ENCODE measurements at regions of chr5 and their contacts with region 1.

Region 1: GRCh38 chr5:138054847-138055558 is 22.1 kb upstream of the FAM13B start:
- DNase-seq: no peak
- CTCF ChIP-seq: no peak

Region 2: DNA sequence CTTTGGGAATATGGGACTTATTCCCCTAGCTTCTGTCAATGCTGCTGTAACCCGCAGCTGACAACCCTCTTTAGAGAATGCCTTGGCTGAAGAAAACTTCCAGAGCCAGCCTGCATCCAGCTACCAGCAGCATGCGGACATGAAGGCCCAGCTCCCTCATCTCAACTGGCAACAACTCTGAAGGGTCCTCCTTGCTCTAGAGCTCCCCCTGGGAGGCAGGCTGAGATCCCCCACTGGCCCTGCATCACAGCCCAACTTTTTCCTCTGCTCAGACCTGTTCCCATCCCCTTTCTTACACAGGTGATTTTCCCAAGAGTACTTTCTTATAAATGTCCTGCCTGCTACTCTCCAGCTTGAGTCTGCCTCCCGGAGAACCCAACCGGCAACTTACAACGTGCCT is 10.1 kb after region 1 on chr5:
- CTCF ChIA-PET with region 1: interaction called, 18 read pairs
- POLR2A ChIA-PET with region 1: interaction called, 6 read pairs
- DNase-seq: no peak
- CTCF ChIP-seq: no peak

Region 3: DNA sequence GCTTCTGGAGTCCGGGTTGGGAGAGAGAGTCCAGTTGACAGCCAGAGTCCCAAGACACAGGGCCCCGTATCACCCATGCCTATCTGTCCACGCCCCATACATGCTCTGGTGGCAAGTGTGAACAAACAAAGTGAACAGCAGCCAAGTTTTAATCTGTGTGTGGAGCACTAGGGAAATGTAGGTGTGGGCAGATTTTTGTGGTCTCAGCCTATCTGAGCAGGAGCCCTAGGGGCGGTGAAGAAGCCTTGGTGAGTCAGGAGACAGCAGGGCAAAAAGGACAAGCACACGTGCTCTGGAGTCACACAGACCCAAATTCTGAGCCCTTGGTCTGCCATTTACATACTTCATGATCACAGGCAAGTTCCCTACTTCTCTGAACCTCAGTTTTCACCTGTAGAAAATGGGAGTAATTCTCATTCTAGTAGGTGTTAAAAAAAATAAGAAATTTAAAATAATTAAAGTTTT is 433.5 kb after region 1 on chr5:
- CTCF ChIA-PET with region 1: no interaction called
- POLR2A ChIA-PET with region 1: no interaction called
- DNase-seq: no peak
- CTCF ChIP-seq: no peak

Measured in GM10248 (cell line).